Activated T-helper 1 cell treated with anti-CD3 and anti-CD28 coated beads, Interleukin-12 subunit alpha, Interleukin-12 subunit beta, Interleukin-2, Interleukin-4 antibody, amounts not matched to agents 30 ng/mL and 10 ng/mL and 1 ng/mL, durations not matched to agents 14 hours and 24 hours and 36 hours (primary cell): ENCODE measurements at regions of chr14 and their contacts with region 1.

Region 1: DNA sequence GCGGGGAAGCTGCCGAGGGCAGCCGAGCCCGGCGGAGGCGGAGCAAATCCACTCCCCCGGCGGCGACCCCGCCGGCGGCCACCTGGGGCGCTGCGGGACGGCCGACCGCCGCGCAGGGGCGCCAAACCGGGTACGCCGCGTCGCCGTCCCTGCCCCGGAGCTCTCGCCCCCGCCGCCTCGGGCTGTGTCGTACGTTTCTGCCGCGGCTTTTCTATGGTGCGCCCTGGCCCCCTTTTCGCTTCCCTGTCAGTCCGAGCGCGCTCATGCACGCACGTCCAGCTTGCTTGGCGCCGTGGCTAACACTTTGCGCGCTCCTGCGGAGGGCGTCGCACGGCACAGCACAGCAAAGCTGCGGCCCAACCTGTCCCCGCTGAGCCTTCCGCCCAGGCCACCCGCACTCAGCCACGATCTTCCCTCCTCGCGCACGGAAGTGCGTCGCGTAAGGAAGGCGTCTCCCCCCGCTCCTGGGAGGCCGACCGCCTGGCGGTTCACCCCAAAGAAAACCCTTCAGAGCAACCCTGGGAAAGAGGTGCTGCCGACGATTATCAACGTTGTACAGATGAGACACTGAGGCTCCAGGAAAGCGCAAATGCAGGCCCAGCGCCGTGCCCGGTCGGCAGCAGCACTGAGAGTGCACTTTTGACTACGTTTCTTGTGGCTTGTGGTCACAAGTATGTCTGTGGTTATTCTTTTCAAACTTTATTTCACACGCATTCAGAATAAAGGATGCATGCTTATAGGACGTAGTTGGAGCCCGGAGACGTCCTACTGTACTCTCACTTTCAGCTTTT is at the start of gene HECTD1:
- DNase-seq: peak; percentile 85
- H3K4me3 Mint-ChIP-seq: peak within 1 kb of the TSS; percentile 95
- H3K27ac Mint-ChIP-seq: peak within 1 kb of the TSS; percentile 100
- H3K4me1 Mint-ChIP-seq: peaks cover 45% of the 10 kb centered on the region
- H3K27me3 Mint-ChIP-seq: peaks cover 3% of the 10 kb centered on the region
- total RNA-seq, gene HECTD1: 118 and 127 TPM in 2 replicates

Region 2: GRCh38 chr14:30621940-30622830 is 585.8 kb before region 1 on chr14 and contains the start of gene SCFD1:
- intact Hi-C with region 1: loop called (anchors 5 kb)
- DNase-seq: peak; percentile 94
- H3K4me3 Mint-ChIP-seq: peak within 1 kb of the TSS; percentile 99
- H3K27ac Mint-ChIP-seq: peak within 1 kb of the TSS; percentile 98
- H3K4me1 Mint-ChIP-seq: peaks cover 56% of the 10 kb centered on the region
- H3K27me3 Mint-ChIP-seq: no peaks in the 10 kb centered on the region
- total RNA-seq, gene SCFD1: 73.1 and 77.3 TPM in 2 replicates

Region 3: GRCh38 chr14:31026395-31027118 is 181.4 kb before region 1 on chr14:
- intact Hi-C with region 1: loop called (anchors 2 kb)
- DNase-seq: peak; percentile 90
- H3K4me3 Mint-ChIP-seq: peak overlapping the region; percentile 99
- H3K27ac Mint-ChIP-seq: peak overlapping the region; percentile 96
- H3K4me1 Mint-ChIP-seq: peaks cover 55% of the 10 kb centered on the region
- H3K27me3 Mint-ChIP-seq: no peaks in the 10 kb centered on the region

Region 4: GRCh38 chr14:31360919-31361662 is 153.1 kb after region 1 on chr14:
- intact Hi-C with region 1: loop called (anchors 1 kb)
- DNase-seq: no peak
- H3K4me3 Mint-ChIP-seq: no peak overlapping the region
- H3K27ac Mint-ChIP-seq: no peak overlapping the region
- H3K4me1 Mint-ChIP-seq: no peaks in the 10 kb centered on the region
- H3K27me3 Mint-ChIP-seq: no peaks in the 10 kb centered on the region

Region 5: GRCh38 chr14:31456841-31457664 is 249.1 kb after region 1 on chr14 and contains the start of gene DTD2:
- intact Hi-C with region 1: loop called (anchors 1 kb)
- DNase-seq: peak; percentile 89
- H3K4me3 Mint-ChIP-seq: peak within 1 kb of the TSS; percentile 96
- H3K27ac Mint-ChIP-seq: peak within 1 kb of the TSS; percentile 95
- H3K4me1 Mint-ChIP-seq: peaks cover 43% of the 10 kb centered on the region
- H3K27me3 Mint-ChIP-seq: peaks cover 2% of the 10 kb centered on the region
- total RNA-seq, gene DTD2: 29.0 and 30.6 TPM in 2 replicates

Region 6: GRCh38 chr14:32202998-32203882 is 995.3 kb after region 1 on chr14 and contains the start of gene RNU6-8:
- intact Hi-C with region 1: loop called (anchors 2 kb)
- DNase-seq: peak; percentile 78
- H3K4me3 Mint-ChIP-seq: peak within 1 kb of the TSS; percentile 87
- H3K27ac Mint-ChIP-seq: peak within 1 kb of the TSS; percentile 91
- H3K4me1 Mint-ChIP-seq: peaks cover 49% of the 10 kb centered on the region
- H3K27me3 Mint-ChIP-seq: peaks cover 2% of the 10 kb centered on the region
- total RNA-seq, gene RNU6-8: not detected in 2 replicates